ENCODE measurements at regions of chr17 and their contacts with region 1.

Region 1: GRCh38 chr17:29760761-29761696 is 138.3 kb upstream of the CORO6 start:
- DNase-seq: peak; percentile 97
- ATAC-seq: peak; percentile 87
- H3K4me3 ChIP-seq: peak overlapping the region; percentile 83 to 96 (median 94)
- H3K4me3 Mint-ChIP-seq: peak overlapping the region; percentile 90
- H3K27ac ChIP-seq: peak overlapping the region; percentile 80 to 83
- H3K27ac Mint-ChIP-seq: peak overlapping the region; percentile 90
- H3K4me1 ChIP-seq: peaks cover 34 to 41% of the 10 kb centered on the region in 2 donors
- H3K4me1 Mint-ChIP-seq: peaks cover 38% of the 10 kb centered on the region
- H3K27me3 ChIP-seq: no peaks in the 10 kb centered on the region
- H3K27me3 Mint-ChIP-seq: no peaks in the 10 kb centered on the region
- CTCF ChIP-seq: no peak

Region 2: DNA sequence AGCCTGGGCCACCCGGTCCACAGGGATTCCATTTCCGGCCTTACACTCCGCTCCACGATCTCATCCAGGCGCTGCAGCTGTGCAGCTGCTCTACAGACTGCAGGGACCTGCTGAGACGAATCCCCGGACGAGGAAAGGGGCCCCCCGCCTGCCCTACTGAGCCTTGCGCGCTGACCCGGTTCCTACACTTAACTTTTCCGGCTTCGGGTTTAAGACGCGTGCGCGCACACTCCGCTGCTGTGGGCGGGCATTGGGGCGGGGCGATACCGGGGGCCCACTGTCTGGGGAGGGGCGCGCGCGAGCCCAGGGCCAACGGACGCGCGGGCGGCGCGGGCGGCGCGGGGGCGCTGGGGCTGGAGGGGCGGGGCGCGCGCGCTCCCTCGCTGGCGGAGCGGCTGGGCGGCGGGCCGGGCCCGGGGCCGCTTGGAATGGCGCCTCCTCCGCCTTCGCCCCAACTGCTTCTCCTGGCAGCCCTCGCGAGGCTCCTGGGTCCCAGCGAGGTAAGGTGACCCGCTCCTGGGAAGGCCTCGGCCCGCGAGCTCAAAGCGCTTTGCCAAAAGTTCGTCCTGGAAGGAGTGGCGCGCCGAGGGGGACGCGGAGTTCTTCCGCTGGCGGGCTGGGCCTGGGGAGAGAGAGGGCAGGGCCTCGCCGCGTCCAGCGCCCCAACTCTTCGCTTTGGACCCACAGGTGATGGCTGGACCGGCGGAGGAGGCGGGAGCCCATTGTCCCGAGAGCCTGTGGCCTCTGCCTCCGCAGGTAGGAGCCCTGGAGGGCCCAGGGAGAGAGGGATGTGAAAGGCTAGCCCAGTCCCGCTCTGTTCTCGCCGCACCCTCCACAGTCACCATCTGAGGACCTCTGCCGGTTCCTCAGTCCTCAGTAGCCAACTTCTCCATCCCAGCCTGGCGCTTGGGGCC is 192.4 kb before region 1 on chr17 and contains the start of gene TP53I13:
- CTCF ChIA-PET with region 1: no interaction called
- POLR2A ChIA-PET with region 1: interaction called, 4 read pairs
- intact Hi-C with region 1: loop called (anchors 5 kb)
- DNase-seq: peak; percentile 92
- ATAC-seq: peak; percentile 60
- H3K4me3 ChIP-seq: peak within 1 kb of the TSS; percentile 71 to 99 (median 80)
- H3K4me3 Mint-ChIP-seq: peak within 1 kb of the TSS; percentile 99
- H3K27ac ChIP-seq: peak within 1 kb of the TSS; percentile 71 to 76
- H3K27ac Mint-ChIP-seq: peak within 1 kb of the TSS; percentile 97
- H3K4me1 ChIP-seq: peaks cover 27 to 40% of the 10 kb centered on the region in 2 donors
- H3K4me1 Mint-ChIP-seq: peaks cover 39% of the 10 kb centered on the region
- H3K27me3 ChIP-seq: no peaks in the 10 kb centered on the region
- H3K27me3 Mint-ChIP-seq: no peaks in the 10 kb centered on the region
- CTCF ChIP-seq: no peak
- total RNA-seq, gene TP53I13: 220 and 224 TPM in 2 replicates

Region 3: DNA sequence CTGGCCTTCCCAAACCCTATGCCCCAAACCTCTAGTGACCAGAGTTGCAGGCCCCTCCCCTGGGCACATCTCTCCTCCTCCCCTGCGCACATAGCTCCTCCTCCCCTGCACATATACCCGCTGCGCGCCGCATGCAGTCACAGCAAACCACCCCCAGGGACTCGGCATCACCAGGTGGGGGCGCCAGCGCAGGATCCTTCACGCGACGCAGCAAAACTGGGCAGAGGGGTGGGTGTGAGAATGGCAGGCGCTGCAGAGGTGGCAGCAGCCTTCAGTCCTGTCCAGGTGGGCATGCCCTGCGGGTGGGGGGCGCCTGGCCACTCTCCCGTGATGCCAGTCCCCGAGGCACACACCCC is 143.9 kb before region 1 on chr17:
- CTCF ChIA-PET with region 1: interaction called, 6 read pairs
- POLR2A ChIA-PET with region 1: interaction called, 4 read pairs
- intact Hi-C with region 1: loop called (anchors 5 kb)
- DNase-seq: peak; percentile 90
- ATAC-seq: peak; percentile 71
- H3K4me3 ChIP-seq: peak overlapping the region in 4 of 5 experiments; percentile 37 to 73 (median 53)
- H3K4me3 Mint-ChIP-seq: peak overlapping the region; percentile 90
- H3K27ac ChIP-seq: no peak overlapping the region
- H3K27ac Mint-ChIP-seq: peak overlapping the region; percentile 64
- H3K4me1 ChIP-seq: peaks cover 56 to 61% of the 10 kb centered on the region in 2 donors
- H3K4me1 Mint-ChIP-seq: peaks cover 47% of the 10 kb centered on the region
- H3K27me3 ChIP-seq: peaks cover 0 to 40% (median 12%) of the 10 kb centered on the region in 4 experiments
- H3K27me3 Mint-ChIP-seq: peaks cover 5% of the 10 kb centered on the region
- CTCF ChIP-seq: peak; percentile 76

Region 4: DNA sequence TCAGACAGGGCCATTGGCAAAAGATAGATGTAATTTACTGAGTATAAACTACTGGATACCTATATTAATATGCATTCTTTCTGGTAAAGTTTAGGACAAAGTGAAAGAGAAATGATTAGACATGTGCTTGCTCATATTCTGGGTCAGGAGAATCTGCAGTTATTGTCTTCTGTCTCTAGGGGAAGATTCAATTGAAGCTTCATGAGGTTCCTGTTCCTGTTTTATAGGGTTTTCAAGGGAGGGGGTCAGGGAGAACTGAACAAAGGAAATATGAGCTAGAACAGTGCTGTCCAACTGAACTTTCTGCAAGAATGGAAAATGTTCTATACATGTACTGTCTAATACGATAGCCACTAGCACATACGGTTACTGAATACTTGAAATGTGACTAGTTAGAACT is 79.0 kb before region 1 on chr17:
- CTCF ChIA-PET with region 1: interaction called, 21 read pairs
- POLR2A ChIA-PET with region 1: interaction called, 6 read pairs
- intact Hi-C with region 1: loop called (anchors 1 kb)
- DNase-seq: peak; percentile 76
- ATAC-seq: peak; percentile 86
- H3K4me3 ChIP-seq: no peak overlapping the region
- H3K4me3 Mint-ChIP-seq: peak overlapping the region; percentile 11
- H3K27ac ChIP-seq: peak overlapping the region in 1 of 2 donors; percentile 58
- H3K27ac Mint-ChIP-seq: peak overlapping the region; percentile 38
- H3K4me1 ChIP-seq: peaks cover 15 to 16% of the 10 kb centered on the region in 2 donors
- H3K4me1 Mint-ChIP-seq: peaks cover 28% of the 10 kb centered on the region
- H3K27me3 ChIP-seq: no peaks in the 10 kb centered on the region
- H3K27me3 Mint-ChIP-seq: no peaks in the 10 kb centered on the region
- CTCF ChIP-seq: peak; percentile 63

Region 5: DNA sequence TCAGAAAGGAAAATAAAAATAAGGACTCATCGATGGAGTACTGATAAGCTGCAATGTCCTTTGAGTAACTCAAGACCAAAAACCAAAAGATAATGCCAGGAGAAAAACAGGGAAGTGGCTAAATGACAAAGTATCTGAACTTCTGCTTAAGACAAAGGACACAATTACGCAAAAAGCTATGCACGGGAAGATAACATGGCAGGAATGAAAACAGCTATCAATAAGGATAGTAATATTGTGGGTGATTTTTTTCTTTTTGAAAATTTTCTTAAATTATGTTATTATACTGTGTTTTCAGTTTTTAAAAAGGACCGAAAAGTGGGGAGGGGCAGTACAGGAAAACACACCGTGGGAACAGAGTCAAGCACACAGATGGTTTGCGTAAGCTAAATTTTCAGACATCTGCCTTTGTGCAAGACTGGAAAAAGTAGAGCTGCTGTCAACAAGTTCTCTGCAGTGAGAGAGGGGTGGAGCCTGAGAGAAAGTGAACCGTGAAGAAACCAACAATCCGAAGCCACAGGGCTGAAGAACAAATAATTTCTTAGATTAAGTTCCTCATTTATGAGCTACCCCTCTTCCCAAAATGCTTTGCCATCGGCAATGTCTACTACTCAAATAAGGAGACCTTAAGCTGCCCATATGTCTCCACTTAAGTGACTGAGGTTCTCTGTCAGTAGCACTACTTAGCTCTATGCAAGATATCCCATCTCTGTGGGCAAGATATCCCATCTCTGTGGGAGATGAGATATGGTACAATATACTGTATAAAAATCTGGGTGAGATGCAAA is 38.4 kb before region 1 on chr17:
- CTCF ChIA-PET with region 1: interaction called, 37 read pairs
- POLR2A ChIA-PET with region 1: interaction called, 31 read pairs
- intact Hi-C with region 1: loop called (anchors 1 kb)
- DNase-seq: peak; percentile 93
- ATAC-seq: peak; percentile 83
- H3K4me3 ChIP-seq: peak overlapping the region in 4 of 5 experiments; percentile 31 to 44 (median 37)
- H3K4me3 Mint-ChIP-seq: peak overlapping the region; percentile 78
- H3K27ac ChIP-seq: peak overlapping the region; percentile 81 to 94
- H3K27ac Mint-ChIP-seq: peak overlapping the region; percentile 91
- H3K4me1 ChIP-seq: peaks cover 91% of the 10 kb centered on the region in 2 donors
- H3K4me1 Mint-ChIP-seq: peaks cover 85% of the 10 kb centered on the region
- H3K27me3 ChIP-seq: no peaks in the 10 kb centered on the region
- H3K27me3 Mint-ChIP-seq: no peaks in the 10 kb centered on the region
- CTCF ChIP-seq: no peak

Region 6: DNA sequence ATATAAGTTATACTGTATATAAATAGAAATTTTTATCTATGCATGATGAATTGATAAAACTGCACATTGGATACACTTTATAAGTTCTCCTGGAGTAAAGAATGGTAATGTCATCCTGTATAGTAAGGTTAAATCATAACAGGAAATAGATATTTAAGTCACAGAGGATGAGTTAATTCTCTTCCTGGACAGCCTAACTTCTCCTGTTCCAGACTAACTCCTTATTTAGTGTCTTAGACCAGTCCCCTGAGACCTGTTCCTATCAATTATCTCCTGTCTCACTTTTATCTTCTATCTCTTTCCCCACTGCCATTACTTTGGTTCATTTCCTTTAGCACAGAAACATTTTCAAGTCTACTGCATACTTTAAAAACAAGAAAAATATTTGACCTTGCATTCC is 122.5 kb after region 1 on chr17:
- CTCF ChIA-PET with region 1: no interaction called
- POLR2A ChIA-PET with region 1: no interaction called
- intact Hi-C with region 1: no loop called
- DNase-seq: no peak
- ATAC-seq: no peak
- H3K4me3 ChIP-seq: no peak overlapping the region
- H3K4me3 Mint-ChIP-seq: no peak overlapping the region
- H3K27ac ChIP-seq: no peak overlapping the region
- H3K27ac Mint-ChIP-seq: no peak overlapping the region
- H3K4me1 ChIP-seq: peaks cover 5 to 6% of the 10 kb centered on the region in 2 donors
- H3K4me1 Mint-ChIP-seq: peaks cover 44% of the 10 kb centered on the region
- H3K27me3 ChIP-seq: no peaks in the 10 kb centered on the region
- H3K27me3 Mint-ChIP-seq: no peaks in the 10 kb centered on the region
- CTCF ChIP-seq: no peak

Region 7: GRCh38 chr17:29905086-29905878 is 144.3 kb after region 1 on chr17:
- CTCF ChIA-PET with region 1: no interaction called
- POLR2A ChIA-PET with region 1: no interaction called
- intact Hi-C with region 1: no loop called
- DNase-seq: no peak
- ATAC-seq: no peak
- H3K4me3 ChIP-seq: no peak overlapping the region
- H3K4me3 Mint-ChIP-seq: no peak overlapping the region
- H3K27ac ChIP-seq: no peak overlapping the region
- H3K27ac Mint-ChIP-seq: no peak overlapping the region
- H3K4me1 ChIP-seq: peaks cover 3 to 8% of the 10 kb centered on the region in 2 donors
- H3K4me1 Mint-ChIP-seq: peaks cover 41% of the 10 kb centered on the region
- H3K27me3 ChIP-seq: no peaks in the 10 kb centered on the region
- H3K27me3 Mint-ChIP-seq: no peaks in the 10 kb centered on the region
- CTCF ChIP-seq: no peak

Measured in B cell (primary cell).